Psoas muscle (tissue), 8 donors: ENCODE measurements at regions of chr1 and their contacts with region 1.

Region 1: DNA sequence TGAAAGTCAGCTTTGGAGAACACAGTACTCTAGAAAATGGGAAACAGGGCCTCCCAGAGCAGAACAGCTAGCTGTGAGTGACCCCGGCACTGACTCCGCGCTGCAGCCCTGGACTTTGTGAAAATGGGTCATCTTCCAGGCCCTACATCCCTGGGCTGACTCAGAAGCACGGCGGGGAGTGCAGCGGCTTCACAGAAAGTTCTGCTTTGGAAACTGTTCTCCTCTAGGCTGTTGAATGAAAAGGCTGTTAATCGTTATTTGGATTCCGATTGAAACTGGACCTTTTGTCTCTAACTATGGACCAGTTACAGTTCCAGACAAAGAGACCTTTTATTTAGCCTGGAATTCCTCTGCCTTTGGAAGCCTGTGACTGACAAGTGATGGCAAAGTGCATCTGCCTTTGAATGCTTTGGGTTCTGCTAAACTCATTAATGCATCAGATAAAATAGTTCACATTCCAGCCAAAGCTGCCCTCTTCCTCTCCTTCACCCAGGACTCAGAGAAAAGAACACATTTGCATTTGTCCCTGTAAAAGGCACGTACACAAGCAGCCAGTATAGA is 144.9 kb upstream of the HOOK1 start:
- DNase-seq: peak; percentile 65 to 74
- ATAC-seq: peak; percentile 47 to 75 (median 64)
- H3K4me3 ChIP-seq: no peak overlapping the region
- H3K27ac ChIP-seq: peak overlapping the region; percentile 2
- H3K4me1 ChIP-seq: peaks cover 30% of the 10 kb centered on the region
- H3K27me3 ChIP-seq: no peaks in the 10 kb centered on the region
- CTCF ChIP-seq: no peak

Region 2: DNA sequence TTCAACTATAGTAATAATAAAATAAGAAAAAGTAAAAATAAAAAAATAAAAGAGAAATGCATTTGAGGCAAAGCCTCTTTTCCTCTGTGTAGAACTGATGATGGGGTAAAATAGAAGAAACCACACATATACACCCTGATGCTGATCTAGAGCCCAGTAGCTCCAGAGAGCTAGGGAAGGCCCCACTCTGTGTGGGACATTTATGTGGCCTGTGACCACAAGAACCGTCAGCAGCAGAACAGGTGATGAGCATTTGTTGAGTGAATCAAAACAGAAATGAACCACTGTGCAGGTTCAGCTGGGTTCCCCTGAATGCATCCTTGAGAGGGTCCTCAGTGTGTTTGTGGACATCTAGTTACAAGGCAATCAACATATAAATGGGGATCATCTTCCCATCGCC is 76.9 kb before region 1 on chr1:
- intact Hi-C with region 1: no loop called
- DNase-seq: no peak
- ATAC-seq: no peak
- H3K4me3 ChIP-seq: no peak overlapping the region
- H3K27ac ChIP-seq: peak overlapping the region; percentile 90
- H3K4me1 ChIP-seq: peaks cover 38% of the 10 kb centered on the region
- H3K27me3 ChIP-seq: no peaks in the 10 kb centered on the region
- CTCF ChIP-seq: no peak

Region 3: DNA sequence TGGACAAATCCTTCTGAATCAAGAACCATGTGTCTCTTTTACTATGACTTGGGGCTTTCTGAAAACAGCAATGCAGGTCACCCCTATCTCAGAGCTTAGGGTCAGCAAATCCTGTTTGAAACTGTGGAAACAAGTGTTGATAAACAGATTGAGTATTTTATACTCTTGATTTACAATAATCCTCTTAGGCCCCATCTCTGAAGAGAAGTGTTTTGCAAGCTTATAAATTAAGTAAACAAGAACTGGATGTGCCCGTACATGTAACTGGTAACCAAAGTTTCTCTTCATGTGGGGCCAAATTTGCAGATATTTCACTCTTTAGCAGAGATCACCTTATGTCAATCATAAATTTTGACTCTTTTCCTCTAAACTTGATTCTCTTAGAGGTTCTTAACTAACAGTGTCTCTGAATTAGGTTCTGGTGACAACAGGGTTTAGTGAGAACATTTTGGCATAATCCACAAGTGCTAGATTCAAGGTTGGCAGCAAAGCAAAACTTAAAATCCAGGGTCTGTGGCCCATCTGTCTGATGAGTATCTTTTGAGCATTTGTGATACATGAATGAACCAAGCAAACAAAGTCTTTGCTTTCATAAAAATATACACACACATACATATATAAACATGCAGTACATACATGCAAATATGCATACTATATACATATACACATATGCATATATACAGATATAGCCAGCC is 38.1 kb before region 1 on chr1:
- intact Hi-C with region 1: loop called in 1 of 2 experiments (anchors 5 kb)
- DNase-seq: no peak
- ATAC-seq: peak in 1 of 4 donors; percentile 50
- H3K4me3 ChIP-seq: no peak overlapping the region
- H3K27ac ChIP-seq: no peak overlapping the region
- H3K4me1 ChIP-seq: peaks cover 5% of the 10 kb centered on the region
- H3K27me3 ChIP-seq: no peaks in the 10 kb centered on the region
- CTCF ChIP-seq: no peak